ENCODE measurements at regions of chr4 and their contacts with region 1.

Region 1: DNA sequence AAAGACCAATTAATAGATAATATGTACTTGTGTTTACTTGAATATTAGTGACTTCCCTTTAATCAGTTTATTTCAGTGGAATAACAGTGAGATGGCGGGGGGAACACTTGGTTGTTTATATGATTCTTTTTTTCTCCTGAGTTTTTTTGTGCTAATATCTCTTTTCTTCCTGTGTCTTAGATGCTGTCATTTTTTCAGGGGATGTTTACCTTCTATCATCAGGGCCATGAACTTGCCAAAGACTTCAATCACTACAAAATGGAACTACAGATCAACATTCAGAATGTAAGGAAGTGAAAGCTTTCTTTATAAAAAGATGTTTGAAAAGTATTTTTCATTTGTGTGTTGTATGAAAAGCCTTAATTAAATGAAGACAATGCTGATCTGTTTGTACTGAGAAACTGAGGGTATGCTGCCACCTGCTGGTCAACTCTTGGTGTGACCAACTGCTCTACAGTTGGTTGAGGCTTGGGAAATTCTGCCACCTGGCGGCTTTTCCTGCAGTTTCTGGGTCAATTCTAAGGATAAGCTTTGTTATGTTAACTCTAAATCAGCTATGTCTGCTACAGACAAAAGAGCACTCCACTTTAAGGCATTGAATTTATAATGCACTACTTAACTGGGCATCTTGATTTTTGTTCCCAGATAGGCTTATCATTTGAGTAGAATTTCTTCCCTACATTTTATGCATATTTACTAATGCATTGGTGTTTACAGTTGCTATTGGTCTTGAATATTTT is 134.8 kb downstream of the ARHGAP10 start:
- DNase-seq: peak; percentile 49 to 80
- H3K4me3 ChIP-seq: no peak overlapping the region
- H3K27ac ChIP-seq: peak overlapping the region; percentile 26; the same call in 1 of the 2 replicates
- H3K4me1 ChIP-seq: no peaks in the 10 kb centered on the region
- H3K27me3 ChIP-seq: no peaks in the 10 kb centered on the region
- CTCF ChIP-seq: peak; percentile 97

Region 2: DNA sequence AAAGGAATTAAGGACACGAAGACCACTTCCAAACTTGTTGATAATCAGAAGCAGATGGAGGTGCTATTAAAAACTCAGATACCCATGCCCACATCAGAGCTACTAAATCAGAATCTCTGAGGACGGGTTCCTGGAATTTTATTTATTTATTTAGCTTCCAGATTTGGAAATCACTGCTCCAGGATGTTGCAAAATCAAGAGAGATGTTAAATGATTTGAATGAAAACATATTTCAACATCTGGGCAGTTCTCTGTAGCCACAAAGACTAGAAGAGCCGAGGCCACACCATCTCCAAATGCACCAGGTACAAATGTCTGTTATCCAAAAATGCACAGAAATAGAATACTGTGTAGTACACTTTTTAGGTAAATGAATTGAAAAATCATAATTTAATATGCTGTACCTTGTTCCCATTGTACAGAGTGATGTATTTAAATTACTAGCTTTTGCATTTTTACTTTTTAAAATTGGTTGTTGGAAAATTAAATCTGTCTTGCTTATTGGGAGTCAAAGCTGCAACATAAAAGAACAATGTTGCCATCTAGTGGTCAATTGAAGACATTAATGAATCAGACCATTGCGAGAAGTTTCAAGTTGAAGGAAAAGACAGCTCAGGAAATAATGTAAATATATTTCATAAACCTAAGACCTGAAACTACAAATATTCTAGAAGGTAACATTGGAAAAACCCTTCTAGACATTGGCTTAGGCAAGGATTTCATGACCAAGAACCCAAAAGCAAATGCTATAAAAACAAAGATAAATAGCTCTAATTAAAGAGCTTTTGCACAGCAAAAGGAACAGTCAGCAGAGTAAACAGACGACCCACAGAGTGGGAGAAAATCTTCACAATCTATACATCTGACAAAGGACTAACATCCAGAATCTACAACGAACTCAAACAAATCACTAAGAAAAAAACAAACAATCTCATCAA is 769.8 kb before region 1 on chr4:
- CTCF ChIA-PET with region 1: no interaction called
- POLR2A ChIA-PET with region 1: no interaction called
- intact Hi-C with region 1: loop called (anchors 5 kb)
- DNase-seq: peak in 1 of 2 experiments; percentile 36
- H3K4me3 ChIP-seq: no peak overlapping the region
- H3K27ac ChIP-seq: no peak overlapping the region
- H3K4me1 ChIP-seq: no peaks in the 10 kb centered on the region
- H3K27me3 ChIP-seq: no peaks in the 10 kb centered on the region
- CTCF ChIP-seq: peak; percentile 78

Region 3: DNA sequence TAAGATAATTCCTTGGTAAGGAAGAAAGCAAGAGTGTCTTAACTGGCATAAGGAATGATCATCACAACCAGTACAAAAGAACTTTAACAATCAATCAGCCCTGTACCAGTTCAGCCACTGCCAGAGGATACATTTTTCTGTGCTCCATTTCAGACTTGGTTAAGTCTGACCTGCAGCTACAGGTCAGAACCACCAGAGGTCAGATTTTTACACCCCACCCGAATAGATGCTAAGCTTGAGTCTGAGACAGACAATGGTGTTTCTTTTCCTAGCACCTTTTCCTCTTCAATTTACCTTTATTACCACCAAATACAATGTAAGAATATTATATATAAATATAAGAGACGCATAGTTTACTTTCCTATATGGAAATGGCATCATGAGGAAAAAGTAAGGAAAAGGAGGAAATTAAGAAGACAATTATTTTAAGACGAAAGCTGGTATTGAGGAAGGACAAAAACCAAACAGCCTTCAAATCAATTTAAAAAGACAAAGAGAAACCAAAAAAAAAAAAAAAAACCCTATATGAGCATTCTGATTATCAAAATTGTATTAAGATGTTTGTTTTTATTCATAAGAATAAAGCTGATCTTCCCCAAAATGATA is 705.7 kb before region 1 on chr4:
- CTCF ChIA-PET with region 1: interaction called, 7 read pairs
- POLR2A ChIA-PET with region 1: no interaction called
- intact Hi-C with region 1: loop called (anchors 2 kb)
- DNase-seq: peak in 1 of 2 experiments; percentile 13
- H3K4me3 ChIP-seq: no peak overlapping the region
- H3K27ac ChIP-seq: no peak overlapping the region
- H3K4me1 ChIP-seq: no peaks in the 10 kb centered on the region
- H3K27me3 ChIP-seq: no peaks in the 10 kb centered on the region
- CTCF ChIP-seq: peak; percentile 75

Region 4: DNA sequence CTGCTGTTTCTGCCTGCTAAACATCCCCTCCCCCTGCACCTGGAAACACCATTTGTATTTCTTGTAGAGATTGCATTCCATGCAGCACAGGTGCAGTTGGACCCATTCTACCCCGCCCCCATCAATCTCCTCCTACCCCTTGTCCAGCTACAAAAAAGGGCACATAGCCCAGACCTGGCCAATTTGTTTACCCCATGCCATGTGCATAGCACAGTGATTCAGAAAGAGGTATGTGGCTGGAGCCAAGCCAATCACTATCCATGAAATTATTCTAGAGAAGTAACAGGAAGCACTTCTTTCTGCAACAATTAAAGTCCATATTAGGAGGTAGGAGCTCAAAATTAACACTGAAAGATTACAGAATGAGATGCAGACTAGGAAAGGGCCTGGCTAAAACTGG is 269.7 kb before region 1 on chr4:
- CTCF ChIA-PET with region 1: interaction called, 7 read pairs
- POLR2A ChIA-PET with region 1: no interaction called
- intact Hi-C with region 1: loop called (anchors 2 kb)
- DNase-seq: peak; percentile 83 to 85
- H3K4me3 ChIP-seq: no peak overlapping the region
- H3K27ac ChIP-seq: peak overlapping the region; percentile 49; the same call in 1 of the 2 replicates
- H3K4me1 ChIP-seq: peaks cover 24% of the 10 kb centered on the region
- H3K27me3 ChIP-seq: no peaks in the 10 kb centered on the region
- CTCF ChIP-seq: no peak

Region 5: DNA sequence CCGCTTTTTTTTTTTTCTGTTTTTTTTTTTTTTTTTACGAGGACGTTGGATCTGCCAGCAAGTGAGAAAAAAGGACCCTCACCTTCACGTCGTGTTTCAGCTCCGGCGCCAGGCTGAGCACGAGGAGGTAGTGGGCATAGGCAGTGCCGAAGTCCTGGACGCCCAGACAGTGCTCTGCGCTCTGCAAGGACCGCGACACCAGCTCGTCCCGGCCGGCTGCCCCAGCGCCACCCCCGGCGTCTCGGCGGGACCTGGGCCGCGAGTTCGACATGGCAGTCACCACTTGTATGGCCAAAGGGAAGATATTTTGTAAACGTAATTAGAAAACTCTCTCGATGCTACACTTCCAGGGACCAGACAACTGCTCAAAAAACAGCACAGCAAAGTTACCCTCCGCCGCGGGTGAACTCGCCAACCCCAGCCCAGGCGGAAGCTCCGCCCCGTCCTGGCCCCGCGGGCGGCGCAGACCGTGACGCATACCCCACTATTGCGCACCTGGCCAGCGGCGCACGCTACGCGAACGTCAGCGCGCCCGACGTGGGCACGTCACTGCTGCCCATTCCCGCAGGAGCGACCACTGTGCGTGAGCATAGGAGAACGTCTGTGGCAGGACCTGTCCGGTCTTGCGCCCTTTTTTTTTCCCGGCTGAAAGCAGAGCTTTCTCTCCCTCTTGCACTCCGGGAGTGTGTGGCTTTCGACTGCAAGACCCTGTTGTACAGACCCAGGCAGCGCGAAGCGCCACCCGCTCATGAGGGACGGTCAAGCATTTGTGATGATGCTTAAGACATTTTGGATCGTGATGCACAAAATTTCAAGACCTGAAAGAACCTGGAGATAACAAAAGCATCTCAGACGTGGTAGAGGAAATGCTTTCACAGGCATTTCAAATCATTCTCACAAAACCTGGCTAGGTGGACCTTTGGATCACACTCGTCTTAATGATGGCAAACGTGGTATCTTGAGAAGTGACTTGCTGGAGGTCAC is 182.7 kb before region 1 on chr4 and contains the start of gene PRMT9:
- CTCF ChIA-PET with region 1: interaction called, 21 read pairs
- POLR2A ChIA-PET with region 1: no interaction called
- intact Hi-C with region 1: no loop called
- DNase-seq: peak; percentile 69 to 89
- H3K4me3 ChIP-seq: peak within 1 kb of the TSS; percentile 82
- H3K27ac ChIP-seq: peak within 1 kb of the TSS; percentile 59
- H3K4me1 ChIP-seq: peaks cover 8% of the 10 kb centered on the region; the same call in 1 of the 2 replicates
- H3K27me3 ChIP-seq: no peaks in the 10 kb centered on the region
- CTCF ChIP-seq: no peak
- total RNA-seq, gene PRMT9: 8.4 and 9.0 TPM in 2 replicates

Region 6: DNA sequence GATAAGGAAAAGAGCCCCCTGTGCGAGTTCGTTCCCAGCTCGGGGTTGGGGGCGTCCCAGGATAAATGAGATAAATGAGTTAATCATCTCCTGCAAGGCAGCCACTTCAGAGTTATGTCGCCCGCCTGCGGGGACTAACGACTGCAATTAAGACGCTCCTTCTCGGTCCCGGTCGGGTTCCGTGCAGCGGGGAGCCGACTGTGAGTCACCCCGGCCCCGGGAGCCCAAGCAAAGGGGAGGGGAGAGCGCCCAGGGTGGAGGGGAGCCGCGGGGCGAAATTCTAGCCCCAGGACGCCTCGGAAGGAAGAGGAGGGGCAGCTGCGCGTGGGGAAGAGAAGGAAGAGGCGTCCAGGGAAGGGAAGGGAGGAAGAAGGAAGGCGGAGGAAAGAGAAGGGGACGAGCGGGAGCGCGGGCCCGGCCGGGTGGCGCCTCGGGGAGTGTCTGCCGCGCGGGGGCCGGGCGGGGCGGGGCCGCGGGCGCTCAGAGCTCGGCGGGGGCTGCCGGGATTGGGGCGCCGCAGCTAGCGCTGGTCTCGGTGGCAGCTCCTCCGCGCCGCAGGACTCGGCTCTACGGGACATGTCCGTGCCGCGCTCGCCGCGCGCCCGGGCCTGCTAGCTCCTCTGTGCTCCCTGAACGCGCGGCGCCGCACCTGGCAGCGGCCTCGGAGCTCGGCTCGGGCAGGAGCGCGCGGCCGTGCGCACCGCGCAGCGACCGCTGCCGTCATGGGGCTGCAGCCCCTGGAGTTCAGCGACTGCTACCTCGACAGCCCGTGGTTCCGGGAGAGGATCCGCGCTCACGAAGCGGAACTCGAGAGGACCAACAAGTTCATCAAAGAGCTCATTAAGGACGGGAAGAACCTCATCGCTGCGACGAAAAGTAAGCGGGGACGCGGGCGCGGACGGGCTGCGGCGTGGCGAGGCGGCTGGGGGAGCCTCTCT is 134.9 kb before region 1 on chr4 and contains the start of gene ARHGAP10:
- CTCF ChIA-PET with region 1: interaction called, 8 read pairs
- POLR2A ChIA-PET with region 1: no interaction called
- intact Hi-C with region 1: loop called (anchors 1 kb)
- DNase-seq: peak; percentile 72 to 85
- H3K4me3 ChIP-seq: peak within 1 kb of the TSS; percentile 85
- H3K27ac ChIP-seq: peak within 1 kb of the TSS; percentile 70
- H3K4me1 ChIP-seq: peaks cover 58% of the 10 kb centered on the region
- H3K27me3 ChIP-seq: no peaks in the 10 kb centered on the region
- CTCF ChIP-seq: no peak
- total RNA-seq, gene ARHGAP10: 21.7 and 27.5 TPM in 2 replicates

Region 7: DNA sequence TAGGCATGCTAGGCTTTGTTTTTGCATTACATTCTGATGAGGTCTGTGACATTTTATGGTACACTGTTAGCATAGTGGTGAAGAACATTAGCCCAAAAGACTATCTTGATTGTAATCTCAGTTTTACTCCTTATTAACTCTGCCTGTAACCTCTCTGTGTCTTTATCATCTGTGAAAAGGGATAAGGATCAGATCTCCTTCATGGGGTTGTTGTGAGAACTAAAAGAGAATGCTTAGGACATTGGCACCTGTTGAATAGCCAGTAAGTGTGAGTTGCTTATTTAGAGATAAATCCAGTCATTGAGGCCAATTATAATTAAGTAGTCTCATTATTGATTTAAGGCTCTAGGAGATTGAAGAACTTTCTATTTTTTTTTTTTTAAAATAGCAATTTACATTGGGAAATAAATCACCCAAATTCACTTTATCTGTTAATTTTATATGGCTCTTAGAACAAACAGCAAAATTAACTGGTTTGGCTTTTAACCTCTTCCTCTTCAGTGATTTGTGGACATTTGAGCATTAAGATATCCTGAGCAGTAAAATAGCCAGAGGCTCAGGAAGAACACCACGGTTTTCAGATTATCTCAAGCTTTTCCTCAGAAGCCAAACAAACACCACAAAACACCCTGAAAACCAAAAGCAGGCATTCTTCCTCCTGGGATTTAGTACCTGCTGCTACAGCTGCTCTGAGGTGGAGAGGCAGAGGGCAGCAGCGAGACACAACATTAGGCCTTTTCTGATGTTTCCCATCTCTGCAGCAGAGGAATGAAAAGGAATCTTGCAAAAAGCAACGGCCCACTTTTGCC is 58.1 kb after region 1 on chr4:
- CTCF ChIA-PET with region 1: no interaction called
- POLR2A ChIA-PET with region 1: no interaction called
- intact Hi-C with region 1: no loop called
- DNase-seq: no peak
- H3K4me3 ChIP-seq: no peak overlapping the region
- H3K27ac ChIP-seq: no peak overlapping the region
- H3K4me1 ChIP-seq: no peaks in the 10 kb centered on the region
- H3K27me3 ChIP-seq: no peaks in the 10 kb centered on the region
- CTCF ChIP-seq: peak; percentile 39; the same call in 1 of the 2 replicates

Region 8: GRCh38 chr4:147984065-147984777 is 117.5 kb after region 1 on chr4:
- CTCF ChIA-PET with region 1: no interaction called
- POLR2A ChIA-PET with region 1: no interaction called
- intact Hi-C with region 1: no loop called
- DNase-seq: no peak
- H3K4me3 ChIP-seq: no peak overlapping the region
- H3K27ac ChIP-seq: no peak overlapping the region
- H3K4me1 ChIP-seq: no peaks in the 10 kb centered on the region
- H3K27me3 ChIP-seq: no peaks in the 10 kb centered on the region
- CTCF ChIP-seq: peak; percentile 65